ENCODE measurements at regions of chr9 and their contacts with region 1.

Region 1: GRCh38 chr9:89400403-89401116 is 82.3 kb downstream of the SECISBP2 start:
- DNase-seq: peak; percentile 35
- ATAC-seq: peak; percentile 83
- H3K4me3 Mint-ChIP-seq: peak overlapping the region; percentile 68
- H3K27ac Mint-ChIP-seq: peak overlapping the region; percentile 90
- H3K4me1 Mint-ChIP-seq: peaks cover 62% of the 10 kb centered on the region
- H3K27me3 Mint-ChIP-seq: no peaks in the 10 kb centered on the region
- CTCF ChIP-seq: no peak

Region 2: GRCh38 chr9:89310475-89311346 is 89.8 kb before region 1 on chr9 and contains the start of gene CKS2:
- CTCF ChIA-PET with region 1: no interaction called
- POLR2A ChIA-PET with region 1: no interaction called
- intact Hi-C with region 1: loop called (anchors 2 kb)
- DNase-seq: peak; percentile 98
- ATAC-seq: peak; percentile 88
- H3K4me3 Mint-ChIP-seq: peak within 1 kb of the TSS; percentile 96
- H3K27ac Mint-ChIP-seq: peak within 1 kb of the TSS; percentile 99
- H3K4me1 Mint-ChIP-seq: peaks cover 48% of the 10 kb centered on the region
- H3K27me3 Mint-ChIP-seq: no peaks in the 10 kb centered on the region
- CTCF ChIP-seq: no peak
- total RNA-seq, gene CKS2: 23.7 and 23.9 TPM in 2 replicates

Region 3: DNA sequence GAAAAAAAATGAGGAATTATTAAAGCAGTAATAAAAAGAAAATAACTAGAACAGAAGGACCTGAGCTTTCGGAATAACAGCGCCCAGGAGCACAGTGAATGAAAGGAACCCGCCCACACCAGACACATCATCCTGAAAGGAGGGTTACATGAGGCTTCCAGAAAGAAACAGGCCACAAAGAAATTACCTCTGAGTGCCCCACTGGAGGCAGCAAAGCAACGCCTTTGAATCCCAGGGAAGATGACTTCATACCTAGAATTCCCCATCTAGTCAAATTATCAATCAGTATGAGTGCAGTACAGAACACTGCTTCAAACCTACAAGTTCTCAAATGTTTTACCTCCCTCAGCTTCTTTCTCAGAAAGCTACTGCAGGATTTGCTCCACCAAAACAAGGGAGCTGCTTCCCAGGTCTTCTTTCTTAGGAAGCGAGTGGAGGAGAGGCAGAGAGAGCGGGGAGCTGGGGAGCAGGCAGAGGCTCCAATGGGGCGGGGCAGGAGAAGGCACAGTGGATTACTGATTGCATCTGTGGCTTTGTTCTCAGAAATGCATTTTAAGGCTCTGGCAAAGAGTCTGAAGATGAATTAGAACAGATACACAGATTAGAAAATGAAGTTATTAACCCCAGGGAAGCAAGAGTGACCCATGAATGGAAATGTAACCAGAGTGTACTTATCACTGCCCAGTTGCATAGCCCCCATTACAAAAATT is 10.2 kb after region 1 on chr9:
- CTCF ChIA-PET with region 1: interaction called, 6 read pairs
- POLR2A ChIA-PET with region 1: interaction called, 8 read pairs
- intact Hi-C with region 1: loop called (anchors 1 kb)
- DNase-seq: no peak
- ATAC-seq: peak; percentile 20
- H3K4me3 Mint-ChIP-seq: no peak overlapping the region
- H3K27ac Mint-ChIP-seq: peak overlapping the region; percentile 35
- H3K4me1 Mint-ChIP-seq: peaks cover 58% of the 10 kb centered on the region
- H3K27me3 Mint-ChIP-seq: no peaks in the 10 kb centered on the region
- CTCF ChIP-seq: no peak

Region 4: DNA sequence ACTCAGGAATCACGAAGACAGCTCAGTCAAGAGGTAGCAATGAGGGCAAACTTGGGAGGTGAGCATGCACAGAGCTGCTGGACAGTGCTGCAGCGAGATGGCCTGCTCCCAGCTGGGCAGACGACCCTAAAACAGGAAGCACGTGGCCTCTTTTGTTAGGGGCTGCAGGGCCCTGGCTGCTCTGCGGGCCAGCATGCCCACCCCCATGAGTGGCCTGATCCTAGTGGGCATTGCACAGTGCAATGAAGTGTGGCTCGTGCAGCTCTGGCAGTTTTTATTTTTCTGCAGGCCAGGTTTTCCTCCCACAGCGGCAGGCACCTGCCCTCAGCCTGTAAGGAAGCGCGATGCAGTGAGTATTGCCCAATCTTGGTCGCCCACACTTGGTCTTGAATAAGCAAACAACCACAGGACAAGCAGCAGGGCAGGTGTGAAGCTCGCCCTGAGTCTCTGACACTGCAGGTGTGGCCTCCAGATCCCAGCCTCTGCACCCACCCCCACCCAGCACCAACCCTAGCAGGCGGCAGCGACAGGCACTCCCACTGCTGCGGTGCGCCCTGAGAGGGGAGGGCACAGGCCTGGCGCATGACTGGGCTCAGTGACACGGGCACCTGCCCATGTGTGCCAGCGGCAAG is 36.6 kb after region 1 on chr9:
- CTCF ChIA-PET with region 1: no interaction called
- POLR2A ChIA-PET with region 1: no interaction called
- intact Hi-C with region 1: no loop called
- DNase-seq: no peak
- ATAC-seq: peak; percentile 67
- H3K4me3 Mint-ChIP-seq: no peak overlapping the region
- H3K27ac Mint-ChIP-seq: peak overlapping the region; percentile 66
- H3K4me1 Mint-ChIP-seq: peaks cover 92% of the 10 kb centered on the region
- H3K27me3 Mint-ChIP-seq: no peaks in the 10 kb centered on the region
- CTCF ChIP-seq: no peak

Region 5: DNA sequence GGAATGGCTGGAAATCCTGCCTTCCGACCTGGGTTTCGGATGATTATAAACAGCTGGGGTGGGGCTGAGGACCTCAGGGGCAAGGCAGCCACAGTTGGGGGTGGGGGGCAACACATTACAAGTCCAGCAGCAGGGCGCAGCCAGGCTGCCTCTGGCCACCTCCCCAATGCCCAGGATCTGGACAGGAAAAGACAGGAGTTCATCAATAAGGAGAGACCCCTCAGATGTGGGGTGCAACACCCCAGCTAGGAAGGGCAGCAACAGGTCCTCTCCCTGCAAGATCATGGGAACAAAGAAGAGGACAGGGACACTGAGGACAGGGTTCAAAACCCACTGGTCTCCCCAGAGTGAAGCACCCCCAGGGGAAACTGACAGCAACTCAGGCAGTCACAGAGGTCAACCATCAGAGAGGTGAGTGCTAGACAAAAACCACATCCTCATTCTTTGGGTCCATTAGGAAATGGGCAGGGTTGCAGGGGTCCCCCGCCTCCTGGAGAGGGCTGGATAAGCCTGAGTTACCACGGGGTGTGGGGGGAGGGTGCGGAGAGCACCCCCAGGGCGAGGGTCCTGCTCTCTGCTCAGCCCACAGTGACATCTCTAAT is 63.8 kb after region 1 on chr9:
- CTCF ChIA-PET with region 1: no interaction called
- POLR2A ChIA-PET with region 1: no interaction called
- intact Hi-C with region 1: loop called (anchors 1 kb)
- DNase-seq: peak; percentile 23
- ATAC-seq: peak; percentile 49
- H3K4me3 Mint-ChIP-seq: peak overlapping the region; percentile 72
- H3K27ac Mint-ChIP-seq: peak overlapping the region; percentile 80
- H3K4me1 Mint-ChIP-seq: peaks cover 90% of the 10 kb centered on the region
- H3K27me3 Mint-ChIP-seq: no peaks in the 10 kb centered on the region
- CTCF ChIP-seq: no peak

Region 6: GRCh38 chr9:89522261-89522958 is 121.8 kb after region 1 on chr9:
- CTCF ChIA-PET with region 1: no interaction called
- POLR2A ChIA-PET with region 1: no interaction called
- intact Hi-C with region 1: loop called (anchors 1 kb)
- DNase-seq: peak; percentile 49
- ATAC-seq: peak; percentile 93
- H3K4me3 Mint-ChIP-seq: peak overlapping the region; percentile 78
- H3K27ac Mint-ChIP-seq: peak overlapping the region; percentile 96
- H3K4me1 Mint-ChIP-seq: peaks cover 85% of the 10 kb centered on the region
- H3K27me3 Mint-ChIP-seq: no peaks in the 10 kb centered on the region
- CTCF ChIP-seq: no peak

Measured in activated B cell treated with CpG ODN at 0.5 μM for 24 hours (primary cell).